ENCODE measurements at regions of chr2 and their contacts with region 1.

Region 1: GRCh38 chr2:201158111-201158929 is 24.6 kb upstream of the CASP10 start:
- DNase-seq: peak; percentile 91

Region 2: GRCh38 chr2:200963124-200963917 is 195.0 kb before region 1 on chr2 and contains the start of gene ORC2:
- intact Hi-C with region 1: loop called (anchors 5 kb)
- DNase-seq: peak; percentile 97
- total RNA-seq, gene ORC2: 24.9 TPM

Region 3: GRCh38 chr2:201118121-201118960 is 40.0 kb before region 1 on chr2:
- intact Hi-C with region 1: loop called (anchors 1 kb)
- DNase-seq: peak; percentile 95